ENCODE measurements at regions of chr12 and their contacts with region 1.

Region 1: DNA sequence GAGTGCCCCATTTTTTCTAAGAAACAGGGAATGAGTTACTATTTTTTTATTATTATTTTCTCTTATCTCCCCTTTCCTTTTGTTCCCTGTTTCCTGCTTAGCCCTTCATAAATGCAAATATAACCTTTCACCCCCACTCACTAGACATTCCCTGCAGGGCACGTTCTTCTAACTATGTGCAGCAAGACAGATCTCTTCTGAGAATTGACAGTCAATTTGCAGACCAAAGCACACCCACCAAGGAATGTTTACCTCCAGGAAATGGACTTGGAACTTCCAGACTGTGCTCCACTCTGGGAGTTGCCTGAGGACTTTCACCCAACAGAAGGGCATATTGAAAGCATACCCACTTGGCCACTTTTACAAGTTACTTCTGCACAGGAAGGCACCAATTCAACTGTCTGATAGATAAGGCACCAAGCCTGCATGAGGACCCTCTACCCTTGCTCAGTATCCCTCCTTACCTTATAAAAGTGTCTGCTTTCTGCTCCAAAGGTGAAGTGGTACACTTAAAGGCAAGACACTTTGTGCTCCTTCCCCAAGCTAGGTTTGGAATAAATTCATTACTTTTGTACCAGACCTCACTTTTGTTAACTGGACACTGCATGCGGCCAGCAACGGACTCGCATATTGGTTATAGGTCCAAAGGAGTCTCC is 6.5 kb downstream of the TAS2R19 start:
- DNase-seq: peak; percentile 57
- H3K4me3 ChIP-seq: no peak overlapping the region
- H3K27ac ChIP-seq: peak overlapping the region; percentile 61 to 73 (median 69)
- H3K4me1 ChIP-seq: peaks cover 0 to 24% (median 14%) of the 10 kb centered on the region in 4 donors
- H3K27me3 ChIP-seq: no peaks in the 10 kb centered on the region
- CTCF ChIP-seq: no peak
- EP300 ChIP-seq: no peak
- POLR2A ChIP-seq: no peak

Region 2: DNA sequence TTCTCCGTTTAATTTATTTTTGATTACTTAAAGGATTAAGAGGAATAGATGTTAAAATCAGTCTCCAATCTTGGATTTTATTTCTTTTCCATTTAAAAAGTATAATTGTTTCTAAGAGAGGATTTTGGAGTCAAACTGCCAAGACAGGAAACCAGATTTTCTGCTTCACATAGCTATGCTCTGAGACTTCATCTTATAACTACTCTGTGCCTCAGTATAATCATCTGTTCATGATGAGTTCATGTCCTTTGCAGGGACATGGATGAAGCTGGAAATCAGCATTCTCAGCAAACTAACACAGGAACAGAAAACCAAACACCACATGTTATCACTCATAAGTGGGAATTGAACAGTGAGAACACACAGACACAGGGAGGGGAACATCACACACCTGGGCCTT is 24.3 kb after region 1 on chr12:
- in situ Hi-C with region 1: no loop called
- intact Hi-C with region 1: no loop called
- DNase-seq: no peak
- H3K4me3 ChIP-seq: no peak overlapping the region
- H3K27ac ChIP-seq: no peak overlapping the region
- H3K4me1 ChIP-seq: no peaks in the 10 kb centered on the region
- H3K27me3 ChIP-seq: no peaks in the 10 kb centered on the region
- CTCF ChIP-seq: no peak
- EP300 ChIP-seq: no peak
- POLR2A ChIP-seq: no peak

Region 3: DNA sequence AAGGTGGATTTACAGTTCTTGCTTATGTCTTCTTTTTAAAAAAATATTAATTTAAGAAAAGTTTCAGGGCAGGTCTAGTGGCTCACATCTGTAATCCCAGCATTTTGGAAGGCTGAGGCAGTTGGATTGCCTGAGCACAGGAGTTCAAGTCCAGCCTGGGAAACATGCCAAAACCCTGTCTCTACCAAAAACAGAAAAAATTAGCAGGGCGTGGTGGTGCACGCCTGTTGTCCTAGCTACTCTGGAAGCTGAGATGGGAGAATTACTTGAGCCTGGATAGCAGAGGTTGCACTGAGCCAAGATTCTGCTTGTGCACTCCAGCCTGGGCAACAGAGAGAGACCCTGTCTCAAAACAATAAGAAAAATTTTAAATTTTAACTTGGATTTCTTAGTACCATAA is 51.6 kb after region 1 on chr12:
- in situ Hi-C with region 1: loop called in 3 of 4 experiments (anchors 5 kb)
- intact Hi-C with region 1: loop called (anchors 2 kb)
- DNase-seq: peak; percentile 13
- H3K4me3 ChIP-seq: no peak overlapping the region
- H3K27ac ChIP-seq: no peak overlapping the region
- H3K4me1 ChIP-seq: peaks cover 0 to 16% (median 4%) of the 10 kb centered on the region in 4 donors
- H3K27me3 ChIP-seq: no peaks in the 10 kb centered on the region
- CTCF ChIP-seq: no peak
- EP300 ChIP-seq: no peak
- POLR2A ChIP-seq: no peak

Region 4: GRCh38 chr12:11885261-11886038 is 869.5 kb after region 1 on chr12:
- in situ Hi-C with region 1: no loop called
- intact Hi-C with region 1: loop called (anchors 5 kb)
- DNase-seq: peak; percentile 67
- H3K4me3 ChIP-seq: no peak overlapping the region
- H3K27ac ChIP-seq: peak overlapping the region; percentile 83 to 89 (median 86)
- H3K4me1 ChIP-seq: peaks cover 21 to 62% (median 51%) of the 10 kb centered on the region in 4 donors
- H3K27me3 ChIP-seq: no peaks in the 10 kb centered on the region
- CTCF ChIP-seq: no peak
- EP300 ChIP-seq: no peak
- POLR2A ChIP-seq: peak; percentile 62

Measured in transverse colon (tissue), 4 donors.